ENCODE measurements at regions of chr18 and their contacts with region 1.

Region 1: GRCh38 chr18:63155169-63155852 is 164.3 kb downstream of the BCL2 start:
- DNase-seq: peak; percentile 79 to 92 (median 83)
- H3K4me3 ChIP-seq: peak overlapping the region; percentile 61 to 66
- H3K4me3 Mint-ChIP-seq: peak overlapping the region; percentile 83 to 93 (median 90)
- H3K27ac ChIP-seq: peak overlapping the region; percentile 97
- H3K27ac Mint-ChIP-seq: peak overlapping the region; percentile 93 to 100 (median 99)
- H3K4me1 ChIP-seq: peaks cover 100% of the 10 kb centered on the region
- H3K4me1 Mint-ChIP-seq: peaks cover 83 to 100% (median 93%) of the 10 kb centered on the region in 4 donors
- H3K27me3 ChIP-seq: no peaks in the 10 kb centered on the region
- H3K27me3 Mint-ChIP-seq: no peaks in the 10 kb centered on the region

Region 2: DNA sequence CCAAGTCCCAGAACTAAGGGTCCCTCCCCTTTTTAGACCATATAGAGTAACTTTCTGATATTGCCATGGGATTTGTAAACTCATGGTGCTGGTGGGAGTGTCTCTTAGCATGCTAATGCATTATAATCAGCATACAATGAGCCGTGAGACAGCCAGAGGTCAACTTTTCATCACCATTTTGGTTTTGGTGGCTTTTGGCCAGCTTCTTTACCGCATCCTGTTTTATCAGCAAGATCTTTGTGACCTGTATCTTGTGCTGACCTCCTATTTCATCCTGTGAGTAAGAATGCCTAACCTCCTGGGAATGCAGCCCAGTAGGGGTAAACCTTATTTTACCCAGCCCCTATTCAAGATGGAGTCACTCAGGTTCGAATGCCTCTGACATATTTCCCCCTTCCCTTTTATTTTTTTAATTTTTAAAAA is 291.7 kb before region 1 on chr18:
- CTCF ChIA-PET with region 1: no interaction called
- POLR2A ChIA-PET with region 1: no interaction called
- intact Hi-C with region 1: no loop called
- DNase-seq: no peak
- H3K4me3 ChIP-seq: no peak overlapping the region
- H3K4me3 Mint-ChIP-seq: no peak overlapping the region
- H3K27ac ChIP-seq: no peak overlapping the region
- H3K27ac Mint-ChIP-seq: no peak overlapping the region
- H3K4me1 ChIP-seq: peaks cover under 1% of the 10 kb centered on the region
- H3K4me1 Mint-ChIP-seq: no peaks in the 10 kb centered on the region
- H3K27me3 ChIP-seq: no peaks in the 10 kb centered on the region
- H3K27me3 Mint-ChIP-seq: no peaks in the 10 kb centered on the region

Region 3: DNA sequence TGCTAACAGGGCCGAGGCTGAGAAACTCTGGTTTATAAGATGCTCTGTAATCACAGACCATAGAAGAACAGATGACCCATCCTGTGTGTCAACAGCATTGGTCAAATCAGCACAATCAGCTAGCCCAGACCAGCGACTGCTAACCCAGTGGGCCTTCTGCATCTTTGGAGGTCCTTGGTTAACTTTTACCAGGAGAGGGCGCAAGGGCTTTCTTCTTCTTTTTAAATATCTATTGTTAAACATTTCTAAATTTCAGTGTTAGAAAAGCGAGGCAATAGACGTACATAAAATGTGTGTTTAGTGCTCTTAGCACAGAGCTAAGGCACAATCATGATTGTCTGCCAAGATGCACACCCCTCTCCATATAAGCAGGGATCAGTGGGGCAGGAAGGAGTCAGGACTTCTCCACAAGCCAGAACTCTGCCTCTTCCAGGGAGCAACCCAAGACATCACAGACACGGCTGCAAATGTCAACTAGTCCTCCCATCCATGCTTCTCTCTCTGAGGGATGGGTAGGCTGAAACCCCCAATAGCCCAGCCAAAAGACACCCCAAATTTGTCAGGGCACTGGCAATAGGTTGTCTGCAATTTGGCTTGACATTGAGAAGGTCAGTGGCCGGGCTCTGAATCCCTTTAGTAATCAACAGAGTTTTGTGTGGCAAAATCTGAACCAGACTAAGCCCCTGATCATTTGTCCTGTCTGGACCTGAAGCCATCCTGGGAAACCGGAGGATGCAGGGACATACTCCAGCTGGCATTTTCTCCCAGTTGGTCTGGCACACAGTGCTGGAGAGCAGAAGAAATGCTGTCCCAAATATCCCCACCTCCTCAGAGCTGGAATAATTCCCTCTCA is 24.0 kb before region 1 on chr18:
- CTCF ChIA-PET with region 1: interaction called, 148 read pairs
- POLR2A ChIA-PET with region 1: interaction called, 54 read pairs
- intact Hi-C with region 1: loop called (anchors 1 kb)
- DNase-seq: peak; percentile 61 to 73 (median 69)
- H3K4me3 ChIP-seq: no peak overlapping the region
- H3K4me3 Mint-ChIP-seq: peak overlapping the region in 5 of 8 donors; percentile 2 to 78 (median 53)
- H3K27ac ChIP-seq: peak overlapping the region; percentile 13
- H3K27ac Mint-ChIP-seq: peak overlapping the region; percentile 84 to 90 (median 89)
- H3K4me1 ChIP-seq: peaks cover 34% of the 10 kb centered on the region
- H3K4me1 Mint-ChIP-seq: peaks cover 31 to 47% (median 34%) of the 10 kb centered on the region in 4 donors
- H3K27me3 ChIP-seq: no peaks in the 10 kb centered on the region
- H3K27me3 Mint-ChIP-seq: no peaks in the 10 kb centered on the region

Region 4: DNA sequence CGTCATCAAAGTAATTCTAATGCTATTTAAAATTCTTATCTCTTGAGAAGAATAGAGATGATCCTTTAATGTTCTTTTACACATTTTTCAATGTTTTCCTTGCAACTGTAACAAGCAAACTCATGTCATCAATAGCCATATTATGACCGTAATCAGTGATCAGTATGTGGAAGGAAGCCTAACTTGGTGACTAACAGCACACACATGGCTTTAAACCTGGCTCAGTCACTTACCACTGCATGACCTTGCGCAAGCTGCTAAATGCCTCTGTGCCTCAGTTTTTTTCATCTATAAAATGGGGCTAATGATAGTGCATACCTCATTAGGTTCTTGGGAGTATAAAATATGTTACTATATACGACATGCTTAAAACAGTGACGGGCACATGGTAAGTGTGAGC is 14.5 kb after region 1 on chr18:
- CTCF ChIA-PET with region 1: interaction called, 37 read pairs
- POLR2A ChIA-PET with region 1: interaction called, 42 read pairs
- intact Hi-C with region 1: no loop called
- DNase-seq: no peak
- H3K4me3 ChIP-seq: no peak overlapping the region
- H3K4me3 Mint-ChIP-seq: no peak overlapping the region
- H3K27ac ChIP-seq: no peak overlapping the region
- H3K27ac Mint-ChIP-seq: peak overlapping the region in 5 of 7 donors; percentile 4 to 41 (median 15)
- H3K4me1 ChIP-seq: peaks cover 35% of the 10 kb centered on the region
- H3K4me1 Mint-ChIP-seq: peaks cover 39 to 66% (median 47%) of the 10 kb centered on the region in 4 donors
- H3K27me3 ChIP-seq: no peaks in the 10 kb centered on the region
- H3K27me3 Mint-ChIP-seq: no peaks in the 10 kb centered on the region

Region 5: GRCh38 chr18:63207143-63207790 is 52.0 kb after region 1 on chr18:
- CTCF ChIA-PET with region 1: interaction called, 14 read pairs
- POLR2A ChIA-PET with region 1: interaction called, 25 read pairs
- intact Hi-C with region 1: no loop called
- DNase-seq: no peak
- H3K4me3 ChIP-seq: peak overlapping the region in 1 of 2 donors; percentile 7
- H3K4me3 Mint-ChIP-seq: peak overlapping the region; percentile 70 to 89 (median 84)
- H3K27ac ChIP-seq: peak overlapping the region; percentile 46
- H3K27ac Mint-ChIP-seq: peak overlapping the region; percentile 81 to 97 (median 89)
- H3K4me1 ChIP-seq: peaks cover 100% of the 10 kb centered on the region
- H3K4me1 Mint-ChIP-seq: peaks cover 79 to 97% (median 90%) of the 10 kb centered on the region in 4 donors
- H3K27me3 ChIP-seq: no peaks in the 10 kb centered on the region
- H3K27me3 Mint-ChIP-seq: no peaks in the 10 kb centered on the region

Region 6: GRCh38 chr18:63224630-63225029 is 69.3 kb after region 1 on chr18:
- CTCF ChIA-PET with region 1: interaction called, 12 read pairs
- POLR2A ChIA-PET with region 1: interaction called, 6 read pairs
- intact Hi-C with region 1: loop called (anchors 2 kb)
- DNase-seq: peak in 1 of 5 donors; percentile 66
- H3K4me3 ChIP-seq: no peak overlapping the region
- H3K4me3 Mint-ChIP-seq: peak overlapping the region in 5 of 8 donors; percentile 13 to 79 (median 58)
- H3K27ac ChIP-seq: peak overlapping the region; percentile 27
- H3K27ac Mint-ChIP-seq: peak overlapping the region; percentile 39 to 92 (median 78)
- H3K4me1 ChIP-seq: peaks cover 84% of the 10 kb centered on the region
- H3K4me1 Mint-ChIP-seq: peaks cover 56 to 94% (median 82%) of the 10 kb centered on the region in 4 donors
- H3K27me3 ChIP-seq: no peaks in the 10 kb centered on the region
- H3K27me3 Mint-ChIP-seq: no peaks in the 10 kb centered on the region

Region 7: GRCh38 chr18:63299837-63300745 is 144.8 kb after region 1 on chr18:
- CTCF ChIA-PET with region 1: interaction called, 23 read pairs
- POLR2A ChIA-PET with region 1: interaction called, 11 read pairs
- intact Hi-C with region 1: no loop called
- DNase-seq: peak in 2 of 5 donors; percentile 21 to 53
- H3K4me3 ChIP-seq: no peak overlapping the region
- H3K4me3 Mint-ChIP-seq: peak overlapping the region; percentile 20 to 87 (median 76)
- H3K27ac ChIP-seq: peak overlapping the region; percentile 22
- H3K27ac Mint-ChIP-seq: peak overlapping the region; percentile 87 to 96 (median 93)
- H3K4me1 ChIP-seq: peaks cover 90% of the 10 kb centered on the region
- H3K4me1 Mint-ChIP-seq: peaks cover 64 to 92% (median 73%) of the 10 kb centered on the region in 4 donors
- H3K27me3 ChIP-seq: no peaks in the 10 kb centered on the region
- H3K27me3 Mint-ChIP-seq: no peaks in the 10 kb centered on the region

Region 8: GRCh38 chr18:63422087-63422809 is 266.9 kb after region 1 on chr18 and contains the start of gene VPS4B:
- CTCF ChIA-PET with region 1: interaction called, 4 read pairs
- POLR2A ChIA-PET with region 1: interaction called, 7 read pairs
- intact Hi-C with region 1: loop called (anchors 5 kb)
- DNase-seq: peak; percentile 99 to 100 (median 100)
- H3K4me3 ChIP-seq: peak within 1 kb of the TSS; percentile 73 to 98
- H3K4me3 Mint-ChIP-seq: peak within 1 kb of the TSS; percentile 94 to 100 (median 96)
- H3K27ac ChIP-seq: peak within 1 kb of the TSS; percentile 98
- H3K27ac Mint-ChIP-seq: peak within 1 kb of the TSS; percentile 94 to 99 (median 97)
- H3K4me1 ChIP-seq: peaks cover 55% of the 10 kb centered on the region
- H3K4me1 Mint-ChIP-seq: peaks cover 19 to 29% (median 21%) of the 10 kb centered on the region in 4 donors
- H3K27me3 ChIP-seq: no peaks in the 10 kb centered on the region
- H3K27me3 Mint-ChIP-seq: peaks cover 3 to 5% of the 10 kb centered on the region in 2 donors
- total RNA-seq, gene VPS4B: 93.0 to 94.9 TPM

Region 9: DNA sequence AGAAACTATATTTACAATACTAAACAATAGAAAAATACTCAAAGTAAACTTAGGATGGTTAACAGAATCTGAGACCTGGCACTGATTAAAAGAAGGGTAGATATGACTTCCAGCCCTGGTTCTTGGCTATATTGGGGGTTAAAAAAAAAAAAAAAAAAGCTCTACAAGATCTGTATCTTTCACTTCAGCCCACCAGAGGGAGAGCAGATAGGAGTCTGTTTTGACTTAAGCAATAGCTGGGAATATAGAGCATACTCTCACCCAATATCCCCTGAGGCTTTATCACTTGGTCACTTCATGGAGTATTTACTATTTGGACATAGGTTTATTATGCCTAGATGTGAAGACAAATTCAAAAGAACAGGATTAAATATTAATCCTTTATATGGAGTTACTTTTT is 1592.5 kb after region 1 on chr18:
- CTCF ChIA-PET with region 1: no interaction called
- POLR2A ChIA-PET with region 1: no interaction called
- intact Hi-C with region 1: no loop called
- DNase-seq: no peak
- H3K4me3 ChIP-seq: no peak overlapping the region
- H3K4me3 Mint-ChIP-seq: no peak overlapping the region
- H3K27ac ChIP-seq: no peak overlapping the region
- H3K27ac Mint-ChIP-seq: no peak overlapping the region
- H3K4me1 ChIP-seq: no peaks in the 10 kb centered on the region
- H3K4me1 Mint-ChIP-seq: no peaks in the 10 kb centered on the region
- H3K27me3 ChIP-seq: no peaks in the 10 kb centered on the region
- H3K27me3 Mint-ChIP-seq: no peaks in the 10 kb centered on the region

Measured in CD4-positive, alpha-beta memory T cell (primary cell).